WTC11 (cell line): ENCODE measurements at regions of chr20 and their contacts with region 1.

Region 1: DNA sequence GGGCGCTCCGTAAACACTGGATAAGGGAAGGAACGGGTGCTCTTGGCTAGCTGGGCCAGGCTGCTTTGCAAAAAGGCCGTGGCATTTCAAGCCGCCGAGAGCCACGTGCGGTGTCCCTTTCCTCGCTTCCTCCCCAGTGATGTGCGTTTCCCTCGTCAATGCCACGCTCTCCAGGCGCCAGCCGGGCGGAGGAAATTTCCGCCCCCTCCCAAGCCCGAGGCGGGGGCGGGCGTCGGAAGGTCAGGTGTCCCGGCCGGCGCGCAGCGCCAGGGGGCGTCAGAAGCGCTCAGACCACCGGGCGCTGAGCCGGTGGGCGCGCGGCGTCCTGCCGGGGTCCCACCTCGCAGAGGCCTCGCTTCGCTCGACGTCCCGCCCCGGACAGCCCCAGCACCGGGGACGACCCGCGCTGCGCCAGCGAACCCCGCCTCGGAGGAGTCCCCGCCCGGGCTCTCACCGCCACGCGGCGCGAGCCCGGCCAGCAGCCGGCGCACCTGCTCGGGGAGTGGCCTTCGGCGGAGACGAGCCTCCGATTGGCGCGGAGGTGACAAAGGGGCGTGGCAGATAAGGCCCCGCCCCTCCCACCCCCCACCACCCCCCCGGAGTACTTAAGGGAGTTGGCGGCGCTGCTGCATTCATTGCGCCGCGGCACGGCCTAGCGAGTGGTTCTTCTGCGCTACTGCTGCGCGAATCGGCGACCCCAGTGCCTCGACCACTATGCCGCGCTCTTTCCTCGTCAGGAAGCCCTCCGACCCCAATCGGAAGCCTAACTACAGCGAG is at the start of gene SNAI1:
- DNase-seq: peak; percentile 83
- ATAC-seq: peak; percentile 52
- H3K4me3 Mint-ChIP-seq: peak within 1 kb of the TSS; percentile 84
- H3K27ac Mint-ChIP-seq: peak within 1 kb of the TSS; percentile 30
- H3K4me1 Mint-ChIP-seq: peaks cover 76% of the 10 kb centered on the region
- H3K27me3 Mint-ChIP-seq: peaks cover 34% of the 10 kb centered on the region
- CTCF ChIP-seq: 0 out of 2 replicates have a peak, but pooled peaks have one; percentile 28
- total RNA-seq, gene SNAI1: 7.0 to 8.7 TPM (median 7.9 TPM) in 3 replicates

Region 2: GRCh38 chr20:49610701-49611538 is 371.6 kb before region 1 on chr20:
- CTCF ChIA-PET with region 1: no interaction called
- POLR2A ChIA-PET with region 1: no interaction called
- DNase-seq: peak; percentile 95
- ATAC-seq: peak; percentile 82
- H3K4me3 Mint-ChIP-seq: peak overlapping the region; percentile 74
- H3K27ac Mint-ChIP-seq: 0 out of 2 replicates have a peak overlapping the region, but pooled peaks have one; percentile 4
- H3K4me1 Mint-ChIP-seq: peaks cover 5% of the 10 kb centered on the region; the same call in 1 of the 2 replicates
- H3K27me3 Mint-ChIP-seq: no peaks in the 10 kb centered on the region
- CTCF ChIP-seq: peak; percentile 100

Region 3: DNA sequence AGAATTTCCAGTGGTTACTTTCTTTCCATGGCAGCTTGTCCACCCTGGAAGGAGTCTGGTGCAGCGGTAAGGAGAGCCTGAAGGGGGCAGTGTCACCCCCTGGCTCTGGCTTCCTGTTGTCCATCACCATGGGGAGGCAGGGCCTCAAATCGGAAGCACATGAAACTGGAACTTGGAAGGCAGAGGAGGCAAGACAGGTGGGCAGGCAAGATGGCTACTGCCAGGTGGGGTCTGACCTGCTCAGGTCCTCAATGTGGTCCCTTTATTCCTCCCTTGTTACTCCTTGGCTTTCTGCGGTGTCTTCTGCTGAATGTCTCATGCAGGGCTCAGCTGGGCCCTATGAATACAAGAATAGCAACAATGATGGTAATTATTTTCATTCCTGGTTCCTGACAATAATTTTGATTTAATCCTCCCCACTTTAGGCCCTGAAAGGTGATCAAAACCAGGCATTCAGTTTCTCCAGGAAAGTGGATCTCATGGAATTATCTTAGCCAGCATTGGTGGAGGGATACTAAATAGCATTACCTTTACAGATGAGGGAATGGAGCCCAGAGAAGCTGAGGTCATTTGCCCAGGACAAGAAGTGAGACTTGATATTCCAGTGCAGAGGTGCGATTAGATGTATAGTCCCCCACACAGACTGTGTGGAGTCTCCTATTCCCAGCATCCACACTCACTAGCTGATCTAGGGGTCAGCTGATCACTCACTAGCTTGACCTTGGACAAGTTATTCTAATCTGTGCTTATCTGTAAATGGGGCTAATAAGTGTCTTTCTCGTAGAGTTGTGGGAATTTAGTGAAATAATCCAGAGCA is 17.4 kb before region 1 on chr20:
- CTCF ChIA-PET with region 1: interaction called, 20 read pairs
- POLR2A ChIA-PET with region 1: no interaction called
- DNase-seq: peak; percentile 81
- ATAC-seq: peak; percentile 98
- H3K4me3 Mint-ChIP-seq: no peak overlapping the region
- H3K27ac Mint-ChIP-seq: no peak overlapping the region
- H3K4me1 Mint-ChIP-seq: peaks cover 8% of the 10 kb centered on the region
- H3K27me3 Mint-ChIP-seq: no peaks in the 10 kb centered on the region
- CTCF ChIP-seq: peak; percentile 62

Region 4: DNA sequence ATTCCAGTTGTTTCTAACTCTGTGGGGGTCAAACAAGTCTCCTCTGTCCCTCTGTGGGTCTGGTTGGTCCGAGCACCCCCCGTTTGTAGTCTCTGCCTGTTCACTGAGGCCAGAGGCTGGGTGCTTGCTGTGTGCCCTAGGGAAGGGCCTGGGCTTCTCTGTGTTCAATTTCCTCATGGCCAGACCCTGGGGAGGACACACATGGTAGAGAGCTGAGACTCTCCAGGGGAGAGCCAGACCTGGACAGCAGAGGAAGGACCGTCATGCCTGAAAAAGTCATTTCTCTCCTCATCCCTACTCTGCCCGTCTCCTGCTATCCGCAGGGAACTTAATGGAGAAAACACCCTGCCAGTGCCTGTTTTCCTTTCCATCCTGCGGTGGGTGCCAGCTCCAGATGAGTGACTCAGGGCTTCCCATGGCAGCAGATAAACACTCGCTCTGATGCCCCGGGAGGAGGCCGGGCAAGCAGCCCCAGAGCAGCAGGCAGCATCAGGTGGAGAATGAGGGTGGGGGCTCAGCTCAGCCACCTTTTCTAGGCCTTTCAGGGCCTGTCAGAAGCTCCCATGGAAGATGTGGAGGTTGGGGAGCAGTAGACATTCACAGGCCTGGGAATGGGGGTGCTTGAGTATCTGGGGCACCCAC is 52.2 kb after region 1 on chr20:
- CTCF ChIA-PET with region 1: interaction called, 11 read pairs
- POLR2A ChIA-PET with region 1: no interaction called
- DNase-seq: no peak
- ATAC-seq: no peak
- H3K4me3 Mint-ChIP-seq: no peak overlapping the region
- H3K27ac Mint-ChIP-seq: no peak overlapping the region
- H3K4me1 Mint-ChIP-seq: peaks cover 15% of the 10 kb centered on the region
- H3K27me3 Mint-ChIP-seq: no peaks in the 10 kb centered on the region
- CTCF ChIP-seq: no peak

Region 5: GRCh38 chr20:50061742-50062516 is 79.4 kb after region 1 on chr20:
- CTCF ChIA-PET with region 1: interaction called, 288 read pairs
- POLR2A ChIA-PET with region 1: interaction called, 3 read pairs
- DNase-seq: no peak
- ATAC-seq: no peak
- H3K4me3 Mint-ChIP-seq: no peak overlapping the region
- H3K27ac Mint-ChIP-seq: no peak overlapping the region
- H3K4me1 Mint-ChIP-seq: peaks cover under 1% of the 10 kb centered on the region; the same call in 1 of the 2 replicates
- H3K27me3 Mint-ChIP-seq: no peaks in the 10 kb centered on the region
- CTCF ChIP-seq: no peak

Region 6: GRCh38 chr20:50115591-50116372 is 133.2 kb after region 1 on chr20:
- CTCF ChIA-PET with region 1: interaction called, 25 read pairs
- POLR2A ChIA-PET with region 1: no interaction called
- DNase-seq: peak; percentile 91
- ATAC-seq: peak; percentile 83
- H3K4me3 Mint-ChIP-seq: peak overlapping the region; percentile 98
- H3K27ac Mint-ChIP-seq: peak overlapping the region; percentile 91
- H3K4me1 Mint-ChIP-seq: peaks cover 39% of the 10 kb centered on the region
- H3K27me3 Mint-ChIP-seq: 0 out of 2 replicates have a peak, but pooled peaks cover 2% of the 10 kb centered on the region
- CTCF ChIP-seq: no peak

Region 7: GRCh38 chr20:50172347-50173013 is 189.9 kb after region 1 on chr20:
- CTCF ChIA-PET with region 1: interaction called, 17 read pairs
- POLR2A ChIA-PET with region 1: no interaction called
- DNase-seq: peak; percentile 93
- ATAC-seq: peak; percentile 96
- H3K4me3 Mint-ChIP-seq: peak overlapping the region; percentile 61
- H3K27ac Mint-ChIP-seq: peak overlapping the region; percentile 86
- H3K4me1 Mint-ChIP-seq: peaks cover 20% of the 10 kb centered on the region
- H3K27me3 Mint-ChIP-seq: no peaks in the 10 kb centered on the region; the same call in 1 of the 2 replicates
- CTCF ChIP-seq: no peak